Prostate gland (tissue), 2 donors: ENCODE measurements at regions of chr2 and their contacts with region 1.

Region 1: GRCh38 chr2:223727562-223727961 is 109.8 kb downstream of the AP1S3 start:
- DNase-seq: no peak
- H3K4me3 ChIP-seq: no peak overlapping the region
- H3K27ac ChIP-seq: no peak overlapping the region
- H3K4me1 ChIP-seq: no peaks in the 10 kb centered on the region
- H3K27me3 ChIP-seq: no peaks in the 10 kb centered on the region
- CTCF ChIP-seq: peak in 2 of 4 experiments; percentile 29 to 52
- POLR2A ChIP-seq: no peak

Region 2: GRCh38 chr2:223692191-223692947 is 35.2 kb before region 1 on chr2:
- intact Hi-C with region 1: loop called (anchors 2 kb)
- DNase-seq: no peak
- H3K4me3 ChIP-seq: no peak overlapping the region
- H3K27ac ChIP-seq: no peak overlapping the region
- H3K4me1 ChIP-seq: no peaks in the 10 kb centered on the region
- H3K27me3 ChIP-seq: no peaks in the 10 kb centered on the region
- CTCF ChIP-seq: peak in 3 of 4 experiments; percentile 31 to 60 (median 33)
- POLR2A ChIP-seq: no peak

Region 3: GRCh38 chr2:223797811-223798721 is 70.5 kb after region 1 on chr2:
- intact Hi-C with region 1: loop called (anchors 5 kb)
- DNase-seq: no peak
- H3K4me3 ChIP-seq: no peak overlapping the region
- H3K27ac ChIP-seq: no peak overlapping the region
- H3K4me1 ChIP-seq: no peaks in the 10 kb centered on the region
- H3K27me3 ChIP-seq: no peaks in the 10 kb centered on the region
- CTCF ChIP-seq: peak in 3 of 4 experiments; percentile 34 to 70 (median 70)
- POLR2A ChIP-seq: no peak